Aorta (tissue), 5 donors: ENCODE measurements at regions of chr2 and their contacts with region 1.

Region 1: DNA sequence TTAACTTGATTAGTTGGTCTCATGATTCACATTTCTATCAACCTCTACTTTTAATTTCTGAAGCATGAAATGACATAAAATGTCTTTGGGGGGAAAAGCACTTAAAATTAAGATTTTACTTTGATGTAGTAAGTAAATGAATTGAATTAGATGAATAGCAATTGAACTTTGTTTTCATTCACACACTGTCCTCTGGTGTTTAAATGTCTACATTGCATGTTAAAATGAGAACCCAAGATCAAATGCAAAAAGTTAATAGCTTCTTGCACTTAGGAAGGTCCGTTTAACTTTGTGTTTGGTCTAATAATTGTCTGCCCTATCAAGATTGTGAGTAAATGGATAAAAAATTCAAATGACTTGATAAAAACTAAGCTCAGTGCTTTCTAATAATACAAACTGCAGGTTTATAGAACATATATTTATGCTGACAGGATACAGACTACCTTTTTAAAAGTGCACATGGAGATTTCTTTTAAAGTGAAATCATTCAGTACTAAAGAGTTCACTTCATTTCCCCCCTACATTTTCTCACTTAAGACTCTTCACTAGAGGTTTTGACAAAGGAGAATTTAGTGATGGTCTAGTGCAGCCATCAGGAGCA is 156.2 kb upstream of the NABP1 start:
- DNase-seq: no peak
- ATAC-seq: no peak
- H3K4me3 ChIP-seq: no peak overlapping the region
- H3K27ac ChIP-seq: no peak overlapping the region
- H3K4me1 ChIP-seq: no peaks in the 10 kb centered on the region
- H3K27me3 ChIP-seq: no peaks in the 10 kb centered on the region

Region 2: GRCh38 chr2:191165176-191165643 is 356.5 kb before region 1 on chr2:
- intact Hi-C with region 1: loop called (anchors 5 kb)
- DNase-seq: no peak
- ATAC-seq: peak; percentile 91
- H3K4me3 ChIP-seq: no peak overlapping the region
- H3K27ac ChIP-seq: no peak overlapping the region
- H3K4me1 ChIP-seq: peaks cover 4 to 11% of the 10 kb centered on the region in 2 donors
- H3K27me3 ChIP-seq: no peaks in the 10 kb centered on the region

Region 3: DNA sequence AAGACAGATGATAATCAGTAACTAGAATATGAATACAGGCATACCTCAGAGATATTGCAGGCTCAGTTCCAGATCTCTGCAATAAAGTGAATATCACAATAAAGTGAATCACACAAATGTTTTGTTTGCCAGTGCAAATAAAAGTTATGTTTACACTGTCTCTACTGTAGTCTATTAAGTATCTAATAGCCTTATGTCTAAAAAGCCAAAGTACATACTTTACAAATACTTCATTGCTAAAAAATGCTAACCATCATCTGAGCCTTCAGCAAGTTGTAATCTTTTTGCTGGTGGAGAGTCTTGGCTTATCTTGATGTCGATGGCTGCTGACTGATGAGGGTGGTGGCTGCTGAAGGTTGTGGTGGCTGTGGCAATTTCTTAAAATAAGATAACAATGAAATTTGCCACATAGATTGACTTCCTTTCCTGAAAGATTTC is 117.1 kb before region 1 on chr2:
- intact Hi-C with region 1: no loop called
- DNase-seq: no peak
- ATAC-seq: no peak
- H3K4me3 ChIP-seq: no peak overlapping the region
- H3K27ac ChIP-seq: no peak overlapping the region
- H3K4me1 ChIP-seq: no peaks in the 10 kb centered on the region
- H3K27me3 ChIP-seq: no peaks in the 10 kb centered on the region